Activated CD4-positive, alpha-beta T cell treated with anti-CD3 and anti-CD28 coated beads, Interleukin-2, amount 10 ng/mL, durations not matched to agents 7 days and 5 days (primary cell): ENCODE measurements at regions of chr20 and their contacts with region 1.

Region 1: DNA sequence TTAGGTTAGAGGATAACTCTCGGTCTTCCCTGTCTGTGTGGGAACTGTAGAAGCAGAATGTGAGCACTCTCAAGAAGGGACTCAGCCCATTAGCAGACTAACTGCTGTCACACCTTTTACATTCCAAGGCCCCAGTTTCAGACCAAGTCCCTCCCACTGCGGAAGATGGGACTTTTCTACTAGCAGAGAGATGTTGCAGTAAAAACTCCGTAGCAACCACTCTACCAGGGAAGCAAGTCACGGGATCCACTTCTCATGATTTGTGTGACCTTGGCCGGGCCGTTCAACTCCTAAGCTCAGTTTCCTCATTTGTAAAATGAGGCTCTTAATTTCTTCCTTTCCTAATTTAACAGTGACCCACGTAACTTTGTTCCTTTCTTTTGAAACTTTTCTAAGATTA is 77.1 kb upstream of the SLC4A11 start:
- DNase-seq: no peak
- H3K4me3 Mint-ChIP-seq: no peak overlapping the region
- H3K27ac Mint-ChIP-seq: no peak overlapping the region
- H3K4me1 Mint-ChIP-seq: no peaks in the 10 kb centered on the region
- H3K27me3 Mint-ChIP-seq: no peaks in the 10 kb centered on the region

Region 2: DNA sequence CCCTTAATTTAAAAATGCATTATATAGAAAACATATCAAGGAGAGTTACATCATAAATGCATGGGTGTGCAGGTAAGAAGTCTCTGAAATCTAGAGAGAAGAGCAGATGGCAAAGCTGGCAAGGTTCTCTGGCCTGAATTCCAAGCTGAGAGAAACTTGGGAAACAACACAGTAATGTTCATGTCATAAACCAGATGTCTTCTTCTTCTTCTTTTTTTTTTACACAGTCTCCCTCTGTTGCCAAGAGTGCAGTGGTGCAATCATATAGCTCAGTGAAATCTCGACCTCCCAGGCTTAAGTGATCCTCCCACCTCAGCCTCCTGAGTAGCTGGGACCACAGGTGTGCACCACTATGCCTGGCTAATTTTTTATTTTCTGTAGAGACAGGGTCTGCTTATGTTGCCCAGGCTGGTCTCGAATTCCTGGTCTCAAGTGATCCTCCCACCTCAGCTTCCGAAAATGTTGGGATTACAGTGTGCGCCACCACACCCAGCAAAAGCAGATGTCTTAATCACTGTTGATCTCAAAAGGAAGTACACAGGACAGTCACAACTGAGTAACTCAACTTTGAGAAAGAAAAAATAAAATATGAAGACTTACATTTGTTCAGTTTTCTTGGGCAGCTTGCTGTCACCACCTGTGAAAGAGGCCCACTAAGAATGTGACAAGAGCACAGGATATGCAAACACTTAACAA is 14.1 kb after region 1 on chr20:
- CTCF ChIA-PET with region 1: interaction called, 10 read pairs
- POLR2A ChIA-PET with region 1: no interaction called
- DNase-seq: no peak
- H3K4me3 Mint-ChIP-seq: no peak overlapping the region
- H3K27ac Mint-ChIP-seq: peak overlapping the region; percentile 72
- H3K4me1 Mint-ChIP-seq: peaks cover 31% of the 10 kb centered on the region
- H3K27me3 Mint-ChIP-seq: no peaks in the 10 kb centered on the region